CD14-positive monocyte (primary cell): ENCODE measurements at regions of chr3 and their contacts with region 1.

Region 1: DNA sequence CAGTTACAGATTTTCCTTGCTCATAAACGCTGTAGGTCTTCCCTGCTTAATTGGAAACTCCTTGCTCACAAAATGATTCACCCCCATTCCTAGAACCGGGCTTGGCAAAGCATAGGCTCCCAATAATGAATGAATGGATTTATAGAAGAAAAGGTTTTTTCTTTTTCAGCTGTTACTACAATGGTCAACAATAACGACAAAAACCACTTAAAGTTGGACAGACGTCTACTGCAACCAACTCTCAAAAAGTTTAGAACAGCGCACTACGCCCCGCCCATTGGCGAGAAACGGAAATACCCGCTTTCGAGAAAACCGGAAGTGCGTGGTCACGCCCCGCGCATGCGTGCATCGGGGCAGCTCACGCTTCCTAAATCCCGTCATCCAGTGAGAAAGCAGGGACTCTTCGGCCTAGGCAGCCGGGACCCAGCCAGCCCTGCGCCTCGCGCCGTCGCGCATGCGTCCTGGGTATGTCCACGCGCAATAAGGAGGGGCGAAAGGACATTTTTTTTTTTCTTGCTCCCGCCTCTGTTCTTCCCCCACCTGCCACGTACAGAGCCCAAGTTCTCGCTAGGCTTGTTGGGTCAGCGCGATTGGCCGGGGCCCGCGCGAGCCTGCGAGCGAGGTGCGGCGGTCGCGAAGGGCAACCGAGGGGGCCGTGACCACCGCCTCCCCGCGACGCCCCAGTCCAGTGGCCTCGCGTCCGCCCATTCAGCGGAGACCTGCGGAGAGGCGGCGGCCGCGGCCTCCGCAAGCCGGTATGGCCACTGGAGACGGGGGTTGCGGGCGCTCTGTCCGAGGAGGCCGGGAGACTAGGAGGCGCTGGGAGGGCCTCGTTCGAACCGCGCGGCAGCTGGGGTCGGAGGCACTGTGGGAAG is at the start of gene TFG:
- DNase-seq: peak; percentile 99 to 100 (median 100)
- H3K4me3 ChIP-seq: peak within 1 kb of the TSS; percentile 65 to 87 (median 83)
- H3K4me3 Mint-ChIP-seq: peak within 1 kb of the TSS; percentile 81 to 88
- H3K27ac ChIP-seq: peak within 1 kb of the TSS; percentile 75 to 86
- H3K27ac Mint-ChIP-seq: peak within 1 kb of the TSS; percentile 88 to 95 (median 93)
- H3K4me1 ChIP-seq: peaks cover 17 to 18% of the 10 kb centered on the region in 2 donors
- H3K4me1 Mint-ChIP-seq: peaks cover 26% of the 10 kb centered on the region
- H3K27me3 ChIP-seq: peaks cover 0 to 6% of the 10 kb centered on the region in 2 donors
- H3K27me3 Mint-ChIP-seq: peaks cover 0 to 4% (median 2%) of the 10 kb centered on the region in 3 donors
- CTCF ChIP-seq: no peak
- polyA plus RNA-seq, gene TFG: 37.9 to 51.2 (median 44.8) TPM

Region 2: DNA sequence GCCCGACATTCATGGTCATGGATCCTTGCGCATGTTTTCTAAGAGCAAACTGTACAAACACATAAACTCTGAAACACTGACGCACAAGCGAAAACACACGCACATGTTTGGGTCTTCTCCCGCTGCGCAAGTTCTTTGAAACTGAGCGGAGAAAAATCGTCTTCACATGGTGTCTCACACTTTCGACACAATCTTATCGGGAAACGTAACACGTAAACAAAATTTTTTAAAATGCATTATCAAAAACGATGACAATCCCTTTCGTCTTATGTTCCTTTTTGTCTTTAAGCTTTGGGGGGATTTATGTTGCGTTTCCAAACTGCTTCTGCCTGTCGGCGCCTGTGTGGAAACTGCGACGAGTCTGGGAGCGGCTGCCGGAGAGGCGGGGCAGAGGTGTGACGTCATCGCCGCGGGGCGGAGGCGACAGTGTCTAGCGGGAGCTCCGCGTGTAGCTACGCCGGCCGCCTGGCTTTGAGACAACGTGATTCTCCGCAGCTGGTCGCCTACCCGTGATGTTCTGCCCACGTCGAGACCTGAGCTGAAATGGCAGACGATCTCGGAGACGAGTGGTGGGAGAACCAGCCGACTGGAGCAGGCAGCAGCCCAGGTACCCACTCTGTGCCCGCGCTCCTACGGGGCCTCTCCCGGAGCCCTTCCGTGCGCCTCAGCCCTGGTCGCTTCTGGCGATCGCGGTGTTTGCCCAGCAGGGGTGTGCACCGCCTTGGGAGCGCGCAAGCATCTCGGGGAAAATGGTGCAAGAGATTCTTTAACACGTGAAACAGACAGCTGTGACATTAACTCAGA is 891.6 kb before region 1 on chr3 and contains the start of gene CMSS1:
- intact Hi-C with region 1: loop called in 1 of 2 experiments (anchors 10 kb)
- DNase-seq: peak; percentile 87 to 90 (median 89)
- H3K4me3 ChIP-seq: peak within 1 kb of the TSS; percentile 41 to 80 (median 77)
- H3K4me3 Mint-ChIP-seq: peak within 1 kb of the TSS; percentile 90 to 95
- H3K27ac ChIP-seq: peak within 1 kb of the TSS; percentile 86 to 96
- H3K27ac Mint-ChIP-seq: peak within 1 kb of the TSS; percentile 97 to 99 (median 98)
- H3K4me1 ChIP-seq: peaks cover 16 to 19% of the 10 kb centered on the region in 2 donors
- H3K4me1 Mint-ChIP-seq: peaks cover 18% of the 10 kb centered on the region
- H3K27me3 ChIP-seq: no peaks in the 10 kb centered on the region
- H3K27me3 Mint-ChIP-seq: peaks cover 0 to 3% (median 2%) of the 10 kb centered on the region in 3 donors
- CTCF ChIP-seq: peak; percentile 19
- polyA plus RNA-seq, gene CMSS1: 1.1 to 3.6 (median 2.2) TPM

Region 3: DNA sequence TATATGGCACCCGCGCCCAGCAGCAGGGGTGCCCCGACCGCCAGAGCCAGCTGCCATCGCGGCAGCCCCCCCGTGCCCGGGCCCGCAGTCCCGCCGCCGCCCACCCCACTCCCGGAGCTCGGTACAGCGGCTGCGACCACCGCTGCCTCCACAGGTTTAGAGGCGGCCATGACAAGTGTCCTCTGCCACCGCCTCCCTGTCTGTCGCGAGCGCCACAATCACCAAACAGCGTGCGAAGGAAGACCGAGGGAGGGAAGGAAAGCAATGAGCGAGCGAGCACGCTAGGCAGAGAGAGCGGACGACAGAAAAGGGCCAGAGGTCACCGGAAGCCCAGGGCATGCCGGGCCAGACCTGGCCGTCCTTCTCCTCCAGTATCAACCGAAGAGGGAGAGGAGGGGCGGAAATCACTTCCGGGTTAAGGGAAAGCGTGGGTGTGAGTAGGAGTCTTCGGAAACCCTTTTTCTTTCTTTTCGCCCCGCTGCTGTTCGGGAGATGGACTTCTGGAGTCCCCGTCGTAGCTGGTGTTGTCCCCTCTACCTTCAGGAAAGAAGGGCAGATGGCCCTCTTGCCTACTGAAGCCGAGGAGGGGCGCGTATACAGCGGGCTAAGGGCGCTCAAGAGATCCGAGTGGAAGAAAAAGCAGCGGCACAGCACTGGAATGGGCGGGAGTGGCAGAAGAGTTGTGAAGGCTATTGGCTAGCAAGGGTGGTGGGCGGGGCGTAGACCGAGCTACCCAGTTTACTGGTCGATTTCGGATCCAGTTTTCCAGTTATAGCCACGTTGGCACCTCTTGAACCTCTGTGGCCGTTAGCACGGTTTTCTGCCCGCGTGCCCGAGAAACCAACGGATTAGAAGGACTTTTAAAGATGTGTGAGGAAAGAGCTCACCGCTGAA is 308.2 kb before region 1 on chr3 and contains the starts of genes LNP1 and TOMM70:
- intact Hi-C with region 1: loop called in 1 of 2 experiments (anchors 5 kb)
- DNase-seq: peak; percentile 90 to 96 (median 92)
- H3K4me3 ChIP-seq: peak within 1 kb of the TSS; percentile 86 to 96 (median 91)
- H3K4me3 Mint-ChIP-seq: peak within 1 kb of the TSS; percentile 89 to 99
- H3K27ac ChIP-seq: peak within 1 kb of the TSS; percentile 85 to 86
- H3K27ac Mint-ChIP-seq: peak within 1 kb of the TSS; percentile 91 to 97 (median 96)
- H3K4me1 ChIP-seq: peaks cover 25 to 29% of the 10 kb centered on the region in 2 donors
- H3K4me1 Mint-ChIP-seq: peaks cover 40% of the 10 kb centered on the region
- H3K27me3 ChIP-seq: no peaks in the 10 kb centered on the region
- H3K27me3 Mint-ChIP-seq: peaks cover 0 to 2% (median 0%) of the 10 kb centered on the region in 3 donors
- CTCF ChIP-seq: no peak
- polyA plus RNA-seq, gene LNP1: 0.07 to 0.26 (median 0.08) TPM
- polyA plus RNA-seq, gene TOMM70: 4.9 to 6.3 (median 6.3) TPM